CD4-positive, alpha-beta memory T cell (primary cell): ENCODE measurements at regions of chr9 and their contacts with region 1.

Region 1: DNA sequence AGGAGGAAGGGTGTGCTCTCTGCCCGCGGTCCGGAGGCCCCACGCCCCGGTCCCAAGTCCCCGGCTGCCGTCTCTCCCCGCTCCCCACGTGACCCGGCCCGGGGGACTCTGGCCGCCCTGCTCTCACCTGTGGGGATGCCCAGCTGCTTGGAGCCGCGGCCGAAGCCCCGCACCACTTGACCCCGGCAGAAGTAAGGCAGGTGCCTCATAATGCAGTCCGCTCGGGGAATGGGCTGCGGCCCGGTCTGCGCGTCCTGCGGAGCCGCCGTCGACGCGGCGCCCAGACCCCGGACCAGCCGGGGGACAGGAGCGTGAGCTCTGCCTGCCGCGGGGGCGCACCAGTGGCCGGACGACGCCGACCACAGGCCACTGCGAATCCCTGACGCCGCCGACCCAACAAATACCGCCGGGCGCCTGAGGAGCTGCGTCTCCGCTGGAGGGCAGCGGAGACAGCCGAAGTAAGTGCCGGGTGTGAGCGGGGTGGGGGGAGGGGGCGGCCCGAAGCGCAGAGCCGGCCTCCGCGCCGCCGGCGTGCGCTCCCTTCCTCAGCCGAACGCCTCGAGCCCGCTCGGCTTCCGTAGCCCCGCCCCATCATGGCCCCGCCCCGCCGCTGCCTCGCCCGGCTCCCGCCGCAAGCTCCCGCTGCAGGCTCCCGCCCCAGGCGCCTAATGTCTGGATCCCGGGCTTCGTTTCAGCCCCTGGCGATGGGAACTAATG is at the start of gene RFK:
- DNase-seq: peak; percentile 90 to 96 (median 93)
- H3K4me3 ChIP-seq: peak within 1 kb of the TSS; percentile 72 to 74
- H3K4me3 Mint-ChIP-seq: peak within 1 kb of the TSS; percentile 91 to 98 (median 95)
- H3K27ac ChIP-seq: peak within 1 kb of the TSS; percentile 79
- H3K27ac Mint-ChIP-seq: peak within 1 kb of the TSS; percentile 94 to 100 (median 98)
- H3K4me1 ChIP-seq: peaks cover 25% of the 10 kb centered on the region
- H3K4me1 Mint-ChIP-seq: peaks cover 12 to 38% (median 25%) of the 10 kb centered on the region in 4 donors
- H3K27me3 ChIP-seq: no peaks in the 10 kb centered on the region
- H3K27me3 Mint-ChIP-seq: no peaks in the 10 kb centered on the region
- total RNA-seq, gene RFK: 13.5 to 16.8 TPM

Region 2: GRCh38 chr9:75027187-75028107 is 1366.7 kb before region 1 on chr9:
- CTCF ChIA-PET with region 1: interaction called, 3 read pairs
- POLR2A ChIA-PET with region 1: no interaction called
- intact Hi-C with region 1: loop called (anchors 10 kb)
- DNase-seq: peak in 4 of 5 donors; percentile 17 to 63 (median 41)
- H3K4me3 ChIP-seq: peak overlapping the region; percentile 72 to 74
- H3K4me3 Mint-ChIP-seq: peak overlapping the region; percentile 94 to 98 (median 96)
- H3K27ac ChIP-seq: peak overlapping the region; percentile 77
- H3K27ac Mint-ChIP-seq: peak overlapping the region; percentile 89 to 99 (median 96)
- H3K4me1 ChIP-seq: peaks cover 48% of the 10 kb centered on the region
- H3K4me1 Mint-ChIP-seq: peaks cover 33 to 54% (median 43%) of the 10 kb centered on the region in 4 donors
- H3K27me3 ChIP-seq: no peaks in the 10 kb centered on the region
- H3K27me3 Mint-ChIP-seq: peaks cover 0 to 2% of the 10 kb centered on the region in 2 donors

Region 3: GRCh38 chr9:76023715-76024195 is 370.4 kb before region 1 on chr9:
- CTCF ChIA-PET with region 1: no interaction called
- POLR2A ChIA-PET with region 1: no interaction called
- intact Hi-C with region 1: loop called (anchors 2 kb)
- DNase-seq: peak; percentile 58 to 76 (median 69)
- H3K4me3 ChIP-seq: peak overlapping the region; percentile 9 to 36
- H3K4me3 Mint-ChIP-seq: peak overlapping the region; percentile 63 to 84 (median 78)
- H3K27ac ChIP-seq: peak overlapping the region; percentile 31
- H3K27ac Mint-ChIP-seq: peak overlapping the region; percentile 76 to 96 (median 87)
- H3K4me1 ChIP-seq: peaks cover 68% of the 10 kb centered on the region
- H3K4me1 Mint-ChIP-seq: peaks cover 58 to 93% (median 75%) of the 10 kb centered on the region in 4 donors
- H3K27me3 ChIP-seq: no peaks in the 10 kb centered on the region
- H3K27me3 Mint-ChIP-seq: no peaks in the 10 kb centered on the region

Region 4: DNA sequence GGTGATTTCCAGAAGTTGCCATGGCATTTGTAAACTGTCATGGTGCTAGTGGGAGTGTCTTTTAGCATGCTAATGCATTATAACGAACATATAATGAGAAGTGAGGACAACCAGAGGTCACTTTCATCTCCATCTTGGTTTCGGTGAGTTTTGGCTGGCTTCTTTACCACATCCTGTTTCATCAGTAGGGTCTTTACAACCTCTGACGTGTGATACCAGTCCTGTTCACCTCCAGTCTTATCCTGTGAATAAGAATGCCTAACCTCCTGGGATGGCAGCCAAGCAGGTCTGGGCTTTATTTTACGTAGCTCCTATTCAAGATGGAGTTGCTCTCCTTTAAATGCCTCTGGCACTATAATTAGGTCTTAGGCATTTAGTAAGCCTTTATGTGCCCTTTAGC is 20.5 kb after region 1 on chr9:
- CTCF ChIA-PET with region 1: interaction called, 11 read pairs
- POLR2A ChIA-PET with region 1: interaction called, 6 read pairs
- intact Hi-C with region 1: loop called (anchors 2 kb)
- DNase-seq: no peak
- H3K4me3 ChIP-seq: no peak overlapping the region
- H3K4me3 Mint-ChIP-seq: peak overlapping the region in 1 of 8 donors; percentile 48
- H3K27ac ChIP-seq: no peak overlapping the region
- H3K27ac Mint-ChIP-seq: peak overlapping the region in 2 of 7 donors; percentile 17 to 48
- H3K4me1 ChIP-seq: peaks cover 14% of the 10 kb centered on the region
- H3K4me1 Mint-ChIP-seq: peaks cover 6 to 48% (median 22%) of the 10 kb centered on the region in 4 donors
- H3K27me3 ChIP-seq: no peaks in the 10 kb centered on the region
- H3K27me3 Mint-ChIP-seq: no peaks in the 10 kb centered on the region

Region 5: DNA sequence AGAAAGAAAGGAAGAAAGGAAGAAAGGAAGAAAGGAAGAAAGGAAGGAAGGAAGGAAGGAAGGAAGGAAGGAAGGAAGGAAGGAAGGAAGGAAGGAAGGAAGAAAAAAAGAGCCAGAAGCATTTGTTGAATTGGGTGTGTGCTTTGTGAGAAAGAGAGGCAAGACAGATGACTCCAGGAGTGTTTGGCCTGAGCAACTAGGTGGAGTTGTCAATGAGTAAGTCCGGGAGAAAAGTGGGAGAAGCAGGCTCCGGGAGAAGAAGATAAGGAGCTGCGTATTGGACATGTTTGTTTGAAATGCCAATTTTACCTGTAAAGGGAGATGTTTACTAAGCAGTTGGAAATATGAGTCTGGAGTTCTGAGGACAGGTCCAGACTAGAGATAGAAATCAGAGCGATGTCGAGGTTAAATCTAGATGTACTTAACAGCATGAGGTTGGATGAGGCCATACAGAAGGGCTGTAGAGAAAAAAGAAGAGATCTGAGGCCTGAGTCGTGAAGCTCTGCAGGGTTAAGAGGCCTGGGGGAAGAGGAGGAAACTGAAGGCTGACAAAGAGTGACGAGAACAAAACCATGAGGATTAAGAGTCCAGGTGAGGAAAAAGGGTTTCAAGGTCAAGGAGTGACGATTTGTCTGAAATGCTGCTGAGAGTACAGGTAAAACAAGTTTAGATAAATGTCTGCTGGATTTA is 49.9 kb after region 1 on chr9:
- CTCF ChIA-PET with region 1: interaction called, 20 read pairs
- POLR2A ChIA-PET with region 1: no interaction called
- intact Hi-C with region 1: loop called (anchors 1 kb)
- DNase-seq: no peak
- H3K4me3 ChIP-seq: no peak overlapping the region
- H3K4me3 Mint-ChIP-seq: peak overlapping the region in 2 of 8 donors; percentile 21 to 36
- H3K27ac ChIP-seq: no peak overlapping the region
- H3K27ac Mint-ChIP-seq: peak overlapping the region in 2 of 7 donors; percentile 3 to 85
- H3K4me1 ChIP-seq: peaks cover 15% of the 10 kb centered on the region
- H3K4me1 Mint-ChIP-seq: peaks cover 0 to 14% (median 9%) of the 10 kb centered on the region in 4 donors
- H3K27me3 ChIP-seq: no peaks in the 10 kb centered on the region
- H3K27me3 Mint-ChIP-seq: no peaks in the 10 kb centered on the region

Region 6: DNA sequence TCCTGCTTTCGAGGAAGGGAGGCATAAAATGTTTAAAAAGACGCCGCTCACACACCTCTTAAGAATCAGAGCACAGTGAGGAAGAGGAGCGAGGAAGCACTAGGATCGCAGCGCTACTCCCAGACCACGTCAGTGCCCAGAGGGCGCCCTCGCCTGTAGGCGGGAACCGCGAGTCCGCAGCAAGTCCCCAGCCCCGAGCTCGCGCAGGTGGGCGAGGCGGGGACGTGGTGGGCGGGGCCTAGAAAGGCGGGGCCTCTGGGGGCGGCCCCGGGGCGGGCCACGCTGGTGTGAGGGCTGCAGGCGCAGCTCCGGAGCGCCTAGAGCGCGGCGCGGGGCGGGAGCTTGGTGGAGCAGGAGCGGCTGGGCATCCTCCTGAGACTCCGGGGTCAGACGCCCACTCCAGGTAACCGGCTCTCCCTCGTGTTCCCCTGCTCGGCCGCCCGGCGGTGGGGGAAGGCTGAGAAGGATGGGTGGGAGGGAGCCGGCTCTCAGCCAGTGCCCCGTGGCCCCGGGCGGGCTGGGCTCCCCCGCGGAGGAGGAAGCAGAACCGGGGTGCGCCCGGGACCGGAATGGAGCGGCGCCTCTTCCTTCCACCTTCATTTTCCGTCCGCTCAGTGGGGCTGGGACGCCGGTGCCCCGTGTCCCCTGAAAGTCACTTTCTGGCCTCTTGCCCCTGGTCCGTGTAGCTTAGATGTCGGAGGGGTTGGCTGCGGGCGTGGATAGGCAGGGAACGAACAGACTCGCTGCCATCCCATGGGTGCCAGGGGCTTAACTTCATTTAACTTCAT is 65.0 kb after region 1 on chr9 and contains the start of gene GCNT1:
- CTCF ChIA-PET with region 1: interaction called, 11 read pairs
- POLR2A ChIA-PET with region 1: interaction called, 14 read pairs
- intact Hi-C with region 1: loop called (anchors 1 kb)
- DNase-seq: peak; percentile 83 to 90 (median 87)
- H3K4me3 ChIP-seq: peak within 1 kb of the TSS; percentile 73 to 92
- H3K4me3 Mint-ChIP-seq: peak within 1 kb of the TSS; percentile 85 to 97 (median 94)
- H3K27ac ChIP-seq: peak within 1 kb of the TSS; percentile 28
- H3K27ac Mint-ChIP-seq: peak within 1 kb of the TSS; percentile 58 to 89 (median 83)
- H3K4me1 ChIP-seq: peaks cover 26% of the 10 kb centered on the region
- H3K4me1 Mint-ChIP-seq: peaks cover 18 to 27% (median 22%) of the 10 kb centered on the region in 4 donors
- H3K27me3 ChIP-seq: no peaks in the 10 kb centered on the region
- H3K27me3 Mint-ChIP-seq: no peaks in the 10 kb centered on the region
- total RNA-seq, gene GCNT1: 3.4 to 5.8 TPM

Region 7: DNA sequence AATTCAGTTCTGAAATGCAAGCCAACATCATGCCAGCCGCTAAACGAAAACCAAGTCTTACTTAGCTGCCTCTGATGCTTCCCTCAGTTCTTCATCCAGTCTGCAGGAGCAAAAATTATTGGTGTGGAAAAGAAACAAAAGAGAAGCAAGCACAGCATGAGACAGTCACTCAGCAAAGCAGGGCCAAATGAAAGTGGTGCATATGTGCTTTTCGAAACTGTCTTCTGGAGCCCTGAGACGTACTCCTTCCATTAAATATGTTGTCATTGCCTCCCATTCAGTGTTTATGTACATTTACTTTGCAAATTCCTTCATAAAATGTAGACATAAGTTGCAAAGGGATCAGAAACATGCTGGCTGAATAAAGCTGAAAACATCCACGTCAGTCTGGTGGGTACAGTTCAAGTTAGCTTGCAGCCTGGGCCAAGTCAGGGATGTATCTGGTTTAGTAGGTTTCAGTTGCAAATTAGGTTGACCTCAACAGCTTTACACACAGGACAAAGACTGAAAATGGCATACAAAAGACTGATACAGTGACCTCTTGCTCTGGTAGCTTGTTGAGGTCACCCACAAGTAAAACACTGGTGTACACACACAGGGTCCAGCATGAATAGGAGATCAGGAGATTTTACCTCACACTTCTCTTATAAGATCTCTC is 230.4 kb after region 1 on chr9:
- CTCF ChIA-PET with region 1: no interaction called
- POLR2A ChIA-PET with region 1: no interaction called
- intact Hi-C with region 1: no loop called
- DNase-seq: no peak
- H3K4me3 ChIP-seq: no peak overlapping the region
- H3K4me3 Mint-ChIP-seq: no peak overlapping the region
- H3K27ac ChIP-seq: no peak overlapping the region
- H3K27ac Mint-ChIP-seq: no peak overlapping the region
- H3K4me1 ChIP-seq: peaks cover under 1% of the 10 kb centered on the region
- H3K4me1 Mint-ChIP-seq: peaks cover 0 to 3% (median 2%) of the 10 kb centered on the region in 4 donors
- H3K27me3 ChIP-seq: no peaks in the 10 kb centered on the region
- H3K27me3 Mint-ChIP-seq: peaks cover 0 to 2% of the 10 kb centered on the region in 2 donors

Region 8: DNA sequence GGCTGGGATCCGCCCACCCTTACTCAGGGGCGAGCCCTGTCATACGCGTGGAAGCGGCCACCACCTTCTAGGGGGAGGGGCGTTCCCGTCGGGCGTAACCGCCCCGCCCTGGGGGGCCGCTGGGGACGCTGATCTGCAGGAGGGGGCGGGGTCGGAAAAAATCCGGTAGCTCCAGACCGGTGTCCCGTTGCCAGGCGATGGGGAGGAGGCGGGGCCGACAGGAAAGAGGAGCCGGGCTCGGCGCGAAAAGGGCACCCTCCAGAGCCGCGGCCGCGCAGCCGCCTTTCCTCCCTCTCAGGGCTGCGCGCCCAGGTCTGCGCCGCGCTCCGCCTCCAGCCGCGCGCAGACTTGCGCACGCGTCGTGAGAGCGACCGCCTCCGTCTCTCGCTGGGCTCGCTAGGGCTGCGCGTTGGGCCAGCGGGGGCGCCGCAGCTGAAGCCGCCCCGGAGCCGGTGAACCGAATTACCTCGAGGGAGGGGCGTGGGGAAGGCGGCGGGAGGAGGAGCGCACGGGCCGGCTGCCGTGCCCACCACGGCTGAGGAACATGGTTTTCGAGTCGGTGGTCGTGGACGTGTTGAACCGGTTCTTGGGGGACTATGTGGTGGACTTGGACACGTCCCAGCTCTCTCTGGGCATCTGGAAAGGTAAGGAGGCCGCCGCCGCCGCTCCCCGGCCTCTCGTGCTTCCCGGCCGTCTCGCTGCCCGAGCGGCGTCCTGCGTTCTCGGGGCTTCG is 783.2 kb after region 1 on chr9 and contains the start of gene VPS13A:
- CTCF ChIA-PET with region 1: no interaction called
- POLR2A ChIA-PET with region 1: interaction called, 4 read pairs
- intact Hi-C with region 1: loop called (anchors 1 kb)
- DNase-seq: peak; percentile 89 to 96 (median 89)
- H3K4me3 ChIP-seq: peak within 1 kb of the TSS; percentile 77 to 79
- H3K4me3 Mint-ChIP-seq: peak within 1 kb of the TSS; percentile 90 to 98 (median 96)
- H3K27ac ChIP-seq: peak within 1 kb of the TSS; percentile 92
- H3K27ac Mint-ChIP-seq: peak within 1 kb of the TSS; percentile 92 to 98 (median 94)
- H3K4me1 ChIP-seq: peaks cover 28% of the 10 kb centered on the region
- H3K4me1 Mint-ChIP-seq: peaks cover 20 to 46% (median 28%) of the 10 kb centered on the region in 4 donors
- H3K27me3 ChIP-seq: no peaks in the 10 kb centered on the region
- H3K27me3 Mint-ChIP-seq: no peaks in the 10 kb centered on the region
- total RNA-seq, gene VPS13A: 53.5 to 58.2 TPM